ENCODE measurements at regions of chr20 and their contacts with region 1.

Region 1: GRCh38 chr20:51385646-51386530 is 156.6 kb downstream of the NFATC2 start:
- DNase-seq: peak; percentile 53
- ATAC-seq: peak; percentile 58
- H3K4me3 Mint-ChIP-seq: no peak overlapping the region
- H3K27ac Mint-ChIP-seq: no peak overlapping the region
- H3K4me1 Mint-ChIP-seq: peaks cover 56% of the 10 kb centered on the region
- H3K27me3 Mint-ChIP-seq: 0 out of 2 replicates have a peak, but pooled peaks cover 2% of the 10 kb centered on the region
- CTCF ChIP-seq: peak; percentile 46; the same call in 1 of the 2 replicates

Region 2: DNA sequence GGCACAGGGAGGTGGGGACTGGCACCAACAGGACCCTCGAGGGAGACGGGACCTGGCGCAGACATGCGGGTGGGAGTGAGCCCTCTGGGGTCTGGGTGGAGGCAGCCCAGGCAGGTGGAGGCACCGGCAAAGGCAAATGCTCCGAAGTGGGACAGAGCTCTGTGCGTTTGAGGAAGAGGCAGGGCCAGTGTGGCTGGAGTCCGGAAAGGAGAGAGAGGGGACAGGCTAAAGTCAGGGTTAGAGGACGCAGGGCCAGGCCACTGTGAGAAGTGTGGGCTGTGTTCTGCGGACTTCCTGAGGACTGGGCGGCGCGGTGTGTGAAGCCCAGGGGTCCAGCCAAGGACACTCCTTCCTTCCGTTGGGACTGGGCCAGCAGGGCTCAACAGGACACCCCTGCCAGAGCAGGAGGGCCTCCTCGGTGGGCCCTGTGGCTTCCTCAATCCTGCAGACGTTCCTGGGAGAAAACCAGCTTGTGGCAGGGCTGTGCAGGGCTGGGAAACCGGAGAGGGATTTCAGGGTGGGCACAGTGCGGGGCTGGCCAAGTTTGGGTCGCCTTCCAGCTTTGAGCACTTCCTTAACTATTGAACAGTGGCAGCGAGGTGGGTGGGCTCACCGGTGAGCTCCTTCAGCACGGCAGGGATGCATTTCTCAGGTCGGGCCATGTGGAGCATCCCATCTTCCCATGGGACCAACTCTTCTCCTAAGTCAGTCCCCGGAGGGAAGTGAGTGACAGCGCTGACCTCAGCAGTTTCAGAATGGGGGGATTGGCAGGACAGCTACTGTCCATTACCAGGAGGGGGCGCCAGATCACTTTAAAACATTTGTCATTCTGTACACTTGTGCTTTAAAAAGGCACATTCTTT is 404.8 kb before region 1 on chr20:
- CTCF ChIA-PET with region 1: interaction called, 16 read pairs
- POLR2A ChIA-PET with region 1: no interaction called
- DNase-seq: peak; percentile 74
- ATAC-seq: peak; percentile 75
- H3K4me3 Mint-ChIP-seq: 0 out of 2 replicates have a peak overlapping the region, but pooled peaks have one; percentile 29
- H3K27ac Mint-ChIP-seq: no peak overlapping the region
- H3K4me1 Mint-ChIP-seq: peaks cover 3% of the 10 kb centered on the region
- H3K27me3 Mint-ChIP-seq: peaks cover 5% of the 10 kb centered on the region; the same call in 1 of the 2 replicates
- CTCF ChIP-seq: peak; percentile 82

Region 3: GRCh38 chr20:51360451-51361221 is 25.3 kb before region 1 on chr20:
- CTCF ChIA-PET with region 1: no interaction called
- POLR2A ChIA-PET with region 1: no interaction called
- DNase-seq: no peak
- ATAC-seq: no peak
- H3K4me3 Mint-ChIP-seq: no peak overlapping the region
- H3K27ac Mint-ChIP-seq: no peak overlapping the region
- H3K4me1 Mint-ChIP-seq: no peaks in the 10 kb centered on the region
- H3K27me3 Mint-ChIP-seq: peaks cover 6% of the 10 kb centered on the region
- CTCF ChIP-seq: no peak

Region 4: GRCh38 chr20:51412333-51412871 is 26.5 kb after region 1 on chr20:
- CTCF ChIA-PET with region 1: interaction called, 24 read pairs
- POLR2A ChIA-PET with region 1: no interaction called
- DNase-seq: no peak
- ATAC-seq: peak; percentile 41
- H3K4me3 Mint-ChIP-seq: no peak overlapping the region
- H3K27ac Mint-ChIP-seq: no peak overlapping the region
- H3K4me1 Mint-ChIP-seq: peaks cover 20% of the 10 kb centered on the region
- H3K27me3 Mint-ChIP-seq: peaks cover 3% of the 10 kb centered on the region; the same call in 1 of the 2 replicates
- CTCF ChIP-seq: no peak

Region 5: GRCh38 chr20:51423290-51423667 is 37.4 kb after region 1 on chr20:
- CTCF ChIA-PET with region 1: interaction called, 27 read pairs
- POLR2A ChIA-PET with region 1: no interaction called
- DNase-seq: no peak
- ATAC-seq: no peak
- H3K4me3 Mint-ChIP-seq: no peak overlapping the region
- H3K27ac Mint-ChIP-seq: peak overlapping the region; percentile 82
- H3K4me1 Mint-ChIP-seq: peaks cover 42% of the 10 kb centered on the region
- H3K27me3 Mint-ChIP-seq: no peaks in the 10 kb centered on the region
- CTCF ChIP-seq: no peak

Region 6: GRCh38 chr20:51514836-51515235 is 128.9 kb after region 1 on chr20:
- CTCF ChIA-PET with region 1: no interaction called
- POLR2A ChIA-PET with region 1: no interaction called
- DNase-seq: no peak
- ATAC-seq: peak; percentile 53
- H3K4me3 Mint-ChIP-seq: no peak overlapping the region
- H3K27ac Mint-ChIP-seq: no peak overlapping the region
- H3K4me1 Mint-ChIP-seq: peaks cover 4% of the 10 kb centered on the region; the same call in 1 of the 2 replicates
- H3K27me3 Mint-ChIP-seq: no peaks in the 10 kb centered on the region; the same call in 1 of the 2 replicates
- CTCF ChIP-seq: no peak

Region 7: GRCh38 chr20:51541189-51542032 is 155.5 kb after region 1 on chr20:
- CTCF ChIA-PET with region 1: interaction called, 39 read pairs
- POLR2A ChIA-PET with region 1: no interaction called
- DNase-seq: peak; percentile 25
- ATAC-seq: peak; percentile 7; the same call in 1 of the 2 replicates
- H3K4me3 Mint-ChIP-seq: peak overlapping the region; percentile 58
- H3K27ac Mint-ChIP-seq: no peak overlapping the region
- H3K4me1 Mint-ChIP-seq: peaks cover 16% of the 10 kb centered on the region
- H3K27me3 Mint-ChIP-seq: peaks cover 37% of the 10 kb centered on the region
- CTCF ChIP-seq: no peak

Region 8: GRCh38 chr20:51595058-51595532 is 209.2 kb after region 1 on chr20:
- CTCF ChIA-PET with region 1: interaction called, 100 read pairs
- POLR2A ChIA-PET with region 1: no interaction called
- DNase-seq: peak; percentile 84
- ATAC-seq: peak; percentile 96
- H3K4me3 Mint-ChIP-seq: no peak overlapping the region
- H3K27ac Mint-ChIP-seq: no peak overlapping the region
- H3K4me1 Mint-ChIP-seq: peaks cover 44% of the 10 kb centered on the region
- H3K27me3 Mint-ChIP-seq: no peaks in the 10 kb centered on the region; the same call in 1 of the 2 replicates
- CTCF ChIP-seq: peak; percentile 61

Region 9: GRCh38 chr20:51616060-51616459 is 230.2 kb after region 1 on chr20:
- CTCF ChIA-PET with region 1: interaction called, 21 read pairs
- POLR2A ChIA-PET with region 1: no interaction called
- DNase-seq: no peak
- ATAC-seq: peak; percentile 59
- H3K4me3 Mint-ChIP-seq: no peak overlapping the region
- H3K27ac Mint-ChIP-seq: no peak overlapping the region
- H3K4me1 Mint-ChIP-seq: 0 out of 2 replicates have a peak, but pooled peaks cover 2% of the 10 kb centered on the region
- H3K27me3 Mint-ChIP-seq: no peaks in the 10 kb centered on the region
- CTCF ChIP-seq: no peak